Heart right ventricle (tissue), 16 donors: ENCODE measurements at regions of chr2 and their contacts with region 1.

Region 1: GRCh38 chr2:196277002-196277401 is 105.6 kb upstream of the STK17B start:
- DNase-seq: no peak
- ATAC-seq: no peak
- H3K4me3 ChIP-seq: no peak overlapping the region
- H3K27ac ChIP-seq: peak overlapping the region in 1 of 10 donors; percentile 61
- H3K4me1 ChIP-seq: peaks cover 0 to 35% (median 17%) of the 10 kb centered on the region in 9 donors
- H3K27me3 ChIP-seq: no peaks in the 10 kb centered on the region
- CTCF ChIP-seq: peak in 8 of 9 donors; percentile 17 to 66 (median 52)

Region 2: DNA sequence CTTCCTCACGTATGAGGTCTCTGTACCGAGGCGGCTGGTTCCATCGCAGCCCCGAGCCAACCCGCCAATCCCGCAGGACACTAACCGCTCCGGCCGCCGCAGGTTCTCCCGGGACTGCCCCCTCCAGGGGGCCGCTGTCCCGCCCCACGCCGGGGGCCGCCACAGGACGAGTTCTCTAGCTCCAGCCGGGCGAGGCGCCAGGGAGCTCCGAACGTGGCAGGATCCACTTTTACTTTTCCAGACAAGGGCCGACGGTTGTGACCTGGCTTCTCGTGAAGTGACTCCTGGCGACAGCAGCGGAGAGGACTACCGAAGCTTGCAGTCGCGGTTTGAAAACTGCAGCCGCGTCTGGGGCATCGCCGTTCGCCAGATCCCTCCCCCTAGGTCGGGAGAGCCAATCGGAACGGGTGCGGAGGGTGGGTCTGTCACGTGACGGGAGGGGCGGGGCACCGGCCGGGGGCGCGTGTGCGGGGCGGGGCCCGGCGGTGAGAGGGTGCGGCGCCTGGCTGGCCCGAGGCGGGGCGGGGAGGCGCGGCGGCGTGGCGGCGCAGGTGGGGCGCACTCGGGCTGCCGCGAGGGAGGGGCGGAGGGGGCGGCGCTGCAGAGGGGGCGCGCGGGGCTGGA is 105.6 kb before region 1 on chr2 and contains the start of gene STK17B:
- intact Hi-C with region 1: loop called in 3 of 10 experiments (anchors 10 kb)
- DNase-seq: peak; percentile 95 to 96
- ATAC-seq: peak; percentile 96 to 99 (median 97)
- H3K4me3 ChIP-seq: peak within 1 kb of the TSS; percentile 75 to 97 (median 85)
- H3K27ac ChIP-seq: peak within 1 kb of the TSS; percentile 67 to 94 (median 80)
- H3K4me1 ChIP-seq: peaks cover 0 to 43% (median 20%) of the 10 kb centered on the region in 9 donors
- H3K27me3 ChIP-seq: no peaks in the 10 kb centered on the region
- CTCF ChIP-seq: peak in 4 of 9 donors; percentile 8 to 31 (median 12)
- total RNA-seq, gene STK17B: 2.6 to 20.4 (median 4.4) TPM